Sigmoid colon (tissue), 7 donors: ENCODE measurements at regions of chrX and their contacts with region 1.

Region 1: GRCh38 chrX:154762523-154763289 is at the start of gene DKC1:
- DNase-seq: peak; percentile 97
- H3K4me3 ChIP-seq: peak within 1 kb of the TSS; percentile 40 to 69 (median 62)
- H3K27ac ChIP-seq: peak within 1 kb of the TSS; percentile 74 to 83 (median 76)
- H3K4me1 ChIP-seq: peaks cover 0 to 14% (median 7%) of the 10 kb centered on the region in 4 donors
- H3K27me3 ChIP-seq: no peaks in the 10 kb centered on the region
- CTCF ChIP-seq: no peak
- EP300 ChIP-seq: no peak
- POLR2A ChIP-seq: no peak
- total RNA-seq, gene DKC1: 18.2 to 38.8 (median 19.2) TPM

Region 2: GRCh38 chrX:154695911-154696675 is 66.6 kb before region 1 on chrX:
- intact Hi-C with region 1: no loop called
- DNase-seq: no peak
- H3K4me3 ChIP-seq: no peak overlapping the region
- H3K27ac ChIP-seq: no peak overlapping the region
- H3K4me1 ChIP-seq: peaks cover 0 to 4% (median 2%) of the 10 kb centered on the region in 4 donors
- H3K27me3 ChIP-seq: no peaks in the 10 kb centered on the region
- CTCF ChIP-seq: no peak
- EP300 ChIP-seq: no peak
- POLR2A ChIP-seq: no peak

Region 3: DNA sequence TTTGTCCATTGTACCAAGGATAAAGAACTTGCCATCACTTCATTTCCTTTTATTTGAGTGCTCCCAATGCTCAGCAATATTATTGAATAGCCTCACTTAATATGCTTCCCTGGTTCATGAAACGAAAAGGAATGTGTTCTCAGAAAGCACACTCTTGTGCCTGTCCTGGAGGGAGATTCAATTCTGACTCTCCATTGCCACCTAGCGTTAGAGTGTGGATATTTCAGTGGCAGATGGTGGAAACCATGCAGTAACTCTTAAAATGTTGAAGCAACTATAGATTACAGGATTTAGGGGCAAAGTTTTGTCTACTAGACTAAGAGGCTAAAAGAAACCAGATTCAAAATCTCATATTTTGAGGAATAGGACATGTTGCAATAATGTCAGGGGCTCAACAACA is 47.8 kb before region 1 on chrX:
- intact Hi-C with region 1: no loop called
- DNase-seq: no peak
- H3K4me3 ChIP-seq: no peak overlapping the region
- H3K27ac ChIP-seq: no peak overlapping the region
- H3K4me1 ChIP-seq: no peaks in the 10 kb centered on the region
- H3K27me3 ChIP-seq: no peaks in the 10 kb centered on the region
- CTCF ChIP-seq: peak; percentile 55 to 65 (median 61)
- EP300 ChIP-seq: no peak
- POLR2A ChIP-seq: no peak

Region 4: DNA sequence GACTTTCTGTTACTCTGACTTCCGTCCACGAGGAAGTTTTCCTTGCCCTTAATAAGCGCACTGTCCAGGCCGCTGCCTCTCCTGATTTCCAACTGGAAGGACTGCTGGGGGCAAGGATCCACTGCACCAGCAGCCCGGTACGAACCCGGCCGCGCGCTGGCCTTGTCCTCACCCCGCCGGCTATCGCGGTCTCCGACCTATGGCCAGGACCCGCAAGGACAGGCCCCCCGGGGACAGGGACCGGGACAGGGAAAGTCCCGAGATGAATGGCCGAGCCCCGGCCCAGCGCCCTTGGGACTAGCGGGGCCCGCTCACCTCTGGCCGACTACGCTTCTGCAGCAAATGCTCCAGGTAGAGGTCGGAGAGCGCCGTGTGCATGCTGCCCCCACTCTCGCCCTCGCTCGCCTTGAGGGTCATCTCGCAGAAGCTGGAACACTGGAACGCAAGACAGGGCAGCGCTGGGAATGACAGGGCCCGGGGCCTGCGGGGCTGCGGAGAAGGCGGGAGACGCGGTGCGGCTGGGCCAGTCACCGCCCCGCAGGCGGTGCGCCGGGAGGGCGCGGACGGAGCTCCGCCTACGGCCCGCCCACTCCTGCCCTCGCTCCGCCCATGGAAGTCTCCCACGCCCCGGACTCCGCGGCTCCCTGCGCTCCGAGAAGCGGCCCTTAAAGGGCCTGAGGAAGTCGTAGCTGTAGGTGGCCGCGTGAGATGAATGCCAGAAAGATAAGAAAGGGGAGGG is 42.4 kb after region 1 on chrX and contains the start of gene MPP1:
- intact Hi-C with region 1: loop called (anchors 5 kb)
- DNase-seq: peak; percentile 87
- H3K4me3 ChIP-seq: peak within 1 kb of the TSS; percentile 48 to 69 (median 67)
- H3K27ac ChIP-seq: peak within 1 kb of the TSS; percentile 80 to 83 (median 82)
- H3K4me1 ChIP-seq: peaks cover 0 to 17% (median 6%) of the 10 kb centered on the region in 4 donors
- H3K27me3 ChIP-seq: no peaks in the 10 kb centered on the region
- CTCF ChIP-seq: no peak
- EP300 ChIP-seq: no peak
- POLR2A ChIP-seq: peak; percentile 29 to 36
- total RNA-seq, gene MPP1: 24.6 to 36.7 (median 28.2) TPM